A673 (cell line): ENCODE measurements at regions of chr16 and their contacts with region 1.

Region 1: GRCh38 chr16:58537124-58537906 is 22.0 kb downstream of the SETD6 start:
- DNase-seq: no peak
- H3K4me3 ChIP-seq: no peak overlapping the region
- H3K27ac ChIP-seq: no peak overlapping the region
- H3K4me1 ChIP-seq: peaks cover 11% of the 10 kb centered on the region
- H3K27me3 ChIP-seq: no peaks in the 10 kb centered on the region
- CTCF ChIP-seq: no peak

Region 2: GRCh38 chr16:58025351-58026138 is 511.8 kb before region 1 on chr16 and contains the start of gene MMP15:
- CTCF ChIA-PET with region 1: no interaction called
- POLR2A ChIA-PET with region 1: no interaction called
- intact Hi-C with region 1: no loop called
- DNase-seq: peak; percentile 83
- H3K4me3 ChIP-seq: peak within 1 kb of the TSS; percentile 70
- H3K27ac ChIP-seq: no peak within 1 kb of the TSS
- H3K4me1 ChIP-seq: peaks cover 27% of the 10 kb centered on the region
- H3K27me3 ChIP-seq: no peaks in the 10 kb centered on the region
- CTCF ChIP-seq: no peak
- total RNA-seq, gene MMP15: 4.5 and 7.0 TPM in 2 replicates

Region 3: DNA sequence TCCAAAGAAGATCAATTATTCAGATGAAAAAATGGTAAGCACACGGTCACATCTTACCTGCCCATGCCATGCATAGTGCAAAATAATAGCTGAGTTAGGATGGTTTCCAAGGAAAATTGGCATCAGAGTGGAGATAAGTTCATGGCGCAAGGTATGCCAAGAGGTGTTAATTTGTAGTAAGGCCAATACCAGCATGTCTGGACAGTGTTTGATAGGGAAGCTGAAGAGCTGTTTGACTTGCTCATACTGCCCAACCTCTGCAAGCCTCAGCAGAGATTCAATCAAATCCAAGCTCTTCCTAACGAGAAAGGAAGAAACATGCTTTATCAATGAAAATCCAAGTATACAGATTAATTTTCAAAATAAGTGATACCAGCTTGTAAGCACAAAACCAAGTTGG is 41.3 kb after region 1 on chr16:
- CTCF ChIA-PET with region 1: no interaction called
- POLR2A ChIA-PET with region 1: no interaction called
- intact Hi-C with region 1: loop called (anchors 5 kb)
- DNase-seq: no peak
- H3K4me3 ChIP-seq: no peak overlapping the region
- H3K27ac ChIP-seq: no peak overlapping the region
- H3K4me1 ChIP-seq: peaks cover 9% of the 10 kb centered on the region
- H3K27me3 ChIP-seq: no peaks in the 10 kb centered on the region
- CTCF ChIP-seq: no peak

Region 4: GRCh38 chr16:58730724-58731370 is 193.5 kb after region 1 on chr16:
- CTCF ChIA-PET with region 1: no interaction called
- POLR2A ChIA-PET with region 1: no interaction called
- intact Hi-C with region 1: no loop called
- DNase-seq: no peak
- H3K4me3 ChIP-seq: no peak overlapping the region
- H3K27ac ChIP-seq: no peak overlapping the region
- H3K4me1 ChIP-seq: peaks cover 5% of the 10 kb centered on the region
- H3K27me3 ChIP-seq: no peaks in the 10 kb centered on the region
- CTCF ChIP-seq: no peak